CD4-positive, alpha-beta memory T cell (primary cell): ENCODE measurements at regions of chr1 and their contacts with region 1.

Region 1: GRCh38 chr1:26321315-26322041 is 3.7 kb downstream of the CD52 start:
- DNase-seq: peak; percentile 88 to 95 (median 91)
- H3K4me3 ChIP-seq: peak overlapping the region in 1 of 2 donors; percentile 94
- H3K4me3 Mint-ChIP-seq: peak overlapping the region; percentile 91 to 100 (median 96)
- H3K27ac ChIP-seq: peak overlapping the region; percentile 69
- H3K27ac Mint-ChIP-seq: peak overlapping the region; percentile 83 to 99 (median 95)
- H3K4me1 ChIP-seq: peaks cover 48% of the 10 kb centered on the region
- H3K4me1 Mint-ChIP-seq: peaks cover 30 to 64% (median 47%) of the 10 kb centered on the region in 4 donors
- H3K27me3 ChIP-seq: no peaks in the 10 kb centered on the region
- H3K27me3 Mint-ChIP-seq: no peaks in the 10 kb centered on the region

Region 2: DNA sequence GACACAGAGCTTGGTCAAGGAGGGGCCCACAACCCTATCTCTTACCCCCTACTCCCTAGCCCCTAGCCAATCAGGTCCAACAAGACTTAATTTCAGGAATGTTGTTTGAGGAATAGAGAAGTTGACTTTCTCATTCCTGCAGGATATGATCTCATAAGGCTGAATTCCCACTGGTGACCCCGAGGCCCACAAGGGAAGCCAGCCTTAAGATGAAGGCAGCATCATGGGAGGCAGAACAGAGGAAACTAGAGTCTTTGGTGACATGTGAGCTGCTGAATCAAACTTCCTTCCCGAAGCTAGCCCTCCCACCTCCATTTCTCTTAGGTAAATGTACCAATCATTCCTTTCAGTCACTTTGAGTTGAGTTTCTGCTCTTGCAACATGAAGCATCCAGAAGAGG is 219.0 kb before region 1 on chr1:
- CTCF ChIA-PET with region 1: no interaction called
- POLR2A ChIA-PET with region 1: no interaction called
- intact Hi-C with region 1: loop called (anchors 1 kb)
- DNase-seq: no peak
- H3K4me3 ChIP-seq: no peak overlapping the region
- H3K4me3 Mint-ChIP-seq: no peak overlapping the region
- H3K27ac ChIP-seq: no peak overlapping the region
- H3K27ac Mint-ChIP-seq: peak overlapping the region in 1 of 7 donors; percentile 17
- H3K4me1 ChIP-seq: no peaks in the 10 kb centered on the region
- H3K4me1 Mint-ChIP-seq: peaks cover 3 to 5% (median 4%) of the 10 kb centered on the region in 4 donors
- H3K27me3 ChIP-seq: no peaks in the 10 kb centered on the region
- H3K27me3 Mint-ChIP-seq: peaks cover 1 to 2% of the 10 kb centered on the region in 2 donors

Region 3: GRCh38 chr1:26190373-26190987 is 131.0 kb before region 1 on chr1 and contains the start of gene CATSPER4:
- CTCF ChIA-PET with region 1: no interaction called
- POLR2A ChIA-PET with region 1: no interaction called
- intact Hi-C with region 1: no loop called
- DNase-seq: peak in 4 of 5 donors; percentile 13 to 33 (median 18)
- H3K4me3 ChIP-seq: no peak within 1 kb of the TSS
- H3K4me3 Mint-ChIP-seq: no peak within 1 kb of the TSS
- H3K27ac ChIP-seq: no peak within 1 kb of the TSS
- H3K27ac Mint-ChIP-seq: peak within 1 kb of the TSS in 4 of 7 donors; percentile 36 to 88 (median 66)
- H3K4me1 ChIP-seq: peaks cover 7% of the 10 kb centered on the region
- H3K4me1 Mint-ChIP-seq: peaks cover 6 to 30% (median 14%) of the 10 kb centered on the region in 4 donors
- H3K27me3 ChIP-seq: no peaks in the 10 kb centered on the region
- H3K27me3 Mint-ChIP-seq: no peaks in the 10 kb centered on the region
- total RNA-seq, gene CATSPER4: not detected

Region 4: GRCh38 chr1:26279456-26280332 is 41.8 kb before region 1 on chr1 and contains the start of gene SH3BGRL3:
- CTCF ChIA-PET with region 1: interaction called, 1,027 read pairs
- POLR2A ChIA-PET with region 1: interaction called, 3,358 read pairs
- intact Hi-C with region 1: loop called (anchors 1 kb)
- DNase-seq: peak; percentile 83 to 88 (median 86)
- H3K4me3 ChIP-seq: peak within 1 kb of the TSS; percentile 50 to 92
- H3K4me3 Mint-ChIP-seq: peak within 1 kb of the TSS; percentile 85 to 96 (median 90)
- H3K27ac ChIP-seq: peak within 1 kb of the TSS; percentile 82
- H3K27ac Mint-ChIP-seq: peak within 1 kb of the TSS; percentile 94 to 98 (median 97)
- H3K4me1 ChIP-seq: peaks cover 88% of the 10 kb centered on the region
- H3K4me1 Mint-ChIP-seq: peaks cover 58 to 90% (median 76%) of the 10 kb centered on the region in 4 donors
- H3K27me3 ChIP-seq: no peaks in the 10 kb centered on the region
- H3K27me3 Mint-ChIP-seq: no peaks in the 10 kb centered on the region
- total RNA-seq, gene SH3BGRL3: 293 to 305 TPM

Region 5: GRCh38 chr1:26300586-26301275 is 20.7 kb before region 1 on chr1:
- CTCF ChIA-PET with region 1: interaction called, 128 read pairs
- POLR2A ChIA-PET with region 1: interaction called, 3,358 read pairs
- intact Hi-C with region 1: no loop called
- DNase-seq: no peak
- H3K4me3 ChIP-seq: no peak overlapping the region
- H3K4me3 Mint-ChIP-seq: no peak overlapping the region
- H3K27ac ChIP-seq: no peak overlapping the region
- H3K27ac Mint-ChIP-seq: peak overlapping the region in 3 of 7 donors; percentile 22 to 73 (median 48)
- H3K4me1 ChIP-seq: peaks cover 6% of the 10 kb centered on the region
- H3K4me1 Mint-ChIP-seq: peaks cover 4 to 22% (median 11%) of the 10 kb centered on the region in 4 donors
- H3K27me3 ChIP-seq: no peaks in the 10 kb centered on the region
- H3K27me3 Mint-ChIP-seq: no peaks in the 10 kb centered on the region

Region 6: GRCh38 chr1:26336477-26337205 is 15.2 kb after region 1 on chr1:
- CTCF ChIA-PET with region 1: interaction called, 14 read pairs
- POLR2A ChIA-PET with region 1: interaction called, 76 read pairs
- intact Hi-C with region 1: no loop called
- DNase-seq: peak; percentile 79 to 88 (median 82)
- H3K4me3 ChIP-seq: peak overlapping the region; percentile 61 to 73
- H3K4me3 Mint-ChIP-seq: peak overlapping the region; percentile 89 to 95 (median 92)
- H3K27ac ChIP-seq: peak overlapping the region; percentile 49
- H3K27ac Mint-ChIP-seq: peak overlapping the region in 6 of 7 donors; percentile 12 to 75 (median 62)
- H3K4me1 ChIP-seq: peaks cover 19% of the 10 kb centered on the region
- H3K4me1 Mint-ChIP-seq: peaks cover 0 to 33% (median 9%) of the 10 kb centered on the region in 4 donors
- H3K27me3 ChIP-seq: no peaks in the 10 kb centered on the region
- H3K27me3 Mint-ChIP-seq: no peaks in the 10 kb centered on the region

Region 7: DNA sequence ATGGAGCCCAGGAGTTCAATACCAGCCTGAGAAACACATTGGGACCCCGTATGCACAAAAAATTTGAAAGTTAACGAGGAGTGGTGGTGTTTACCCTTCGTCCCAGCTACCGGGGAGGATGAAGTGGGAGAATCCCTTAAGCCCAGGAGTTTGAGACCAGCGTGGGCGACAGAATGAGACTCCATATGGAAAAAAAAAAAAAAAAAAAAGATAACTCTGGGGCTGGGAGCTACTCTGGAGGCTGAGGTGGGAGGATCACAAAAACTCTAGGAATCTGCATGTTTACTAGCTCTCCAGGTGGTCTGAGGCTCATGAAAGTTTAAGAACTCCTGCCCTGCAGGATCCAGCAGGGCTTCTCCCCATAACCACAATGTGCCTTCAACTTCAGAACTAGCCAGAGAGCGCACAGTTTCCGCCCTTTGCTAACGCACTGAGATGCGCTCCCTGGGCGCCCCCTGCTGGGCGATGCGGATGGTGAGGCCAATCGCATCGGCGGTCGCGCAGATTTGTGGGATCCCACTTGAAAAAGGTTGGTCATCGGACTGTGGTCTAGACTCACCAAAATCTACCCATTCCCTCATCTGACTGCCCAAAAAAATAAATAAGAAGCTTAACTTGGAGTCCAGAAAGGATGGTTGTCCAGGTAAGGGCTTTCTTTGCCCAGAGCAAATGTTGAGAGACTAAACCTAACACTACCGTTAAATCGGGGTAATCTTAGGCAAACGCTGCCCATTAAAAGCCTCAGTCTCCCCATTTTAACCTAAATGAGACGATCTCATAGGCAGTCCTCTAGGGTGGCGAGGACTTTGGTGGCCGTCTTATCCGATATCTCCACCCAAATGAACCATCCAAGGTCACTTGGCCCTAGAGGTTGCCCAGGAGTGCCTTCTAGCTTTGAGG is 42.3 kb after region 1 on chr1:
- CTCF ChIA-PET with region 1: interaction called, 34 read pairs
- POLR2A ChIA-PET with region 1: interaction called, 32 read pairs
- intact Hi-C with region 1: loop called (anchors 2 kb)
- DNase-seq: peak; percentile 78 to 84 (median 79)
- H3K4me3 ChIP-seq: no peak overlapping the region
- H3K4me3 Mint-ChIP-seq: peak overlapping the region in 6 of 8 donors; percentile 54 to 82 (median 64)
- H3K27ac ChIP-seq: no peak overlapping the region
- H3K27ac Mint-ChIP-seq: peak overlapping the region in 6 of 7 donors; percentile 27 to 88 (median 70)
- H3K4me1 ChIP-seq: peaks cover 70% of the 10 kb centered on the region
- H3K4me1 Mint-ChIP-seq: peaks cover 31 to 81% (median 52%) of the 10 kb centered on the region in 4 donors
- H3K27me3 ChIP-seq: no peaks in the 10 kb centered on the region
- H3K27me3 Mint-ChIP-seq: no peaks in the 10 kb centered on the region

Region 8: DNA sequence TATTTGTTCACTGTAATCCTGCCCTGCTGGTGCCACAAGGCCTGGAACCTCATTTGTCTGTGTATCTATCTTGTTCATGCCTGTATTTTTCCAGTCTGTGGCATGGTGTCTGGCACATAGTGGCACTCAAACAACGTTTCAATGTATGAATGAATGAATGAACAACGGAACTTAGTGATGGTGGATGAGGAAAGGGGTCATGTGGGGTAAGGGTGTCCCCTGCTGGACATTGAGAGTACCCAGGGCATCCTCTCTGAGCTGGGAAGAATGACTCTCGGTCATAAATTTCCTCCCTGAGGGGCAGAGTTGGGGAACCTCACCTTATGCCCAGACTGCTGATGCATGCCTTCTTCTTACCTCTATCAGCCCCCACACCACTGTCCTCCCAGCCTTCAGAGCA is 70.0 kb after region 1 on chr1:
- CTCF ChIA-PET with region 1: interaction called, 29 read pairs
- POLR2A ChIA-PET with region 1: interaction called, 53 read pairs
- intact Hi-C with region 1: loop called (anchors 1 kb)
- DNase-seq: peak; percentile 52 to 63 (median 56)
- H3K4me3 ChIP-seq: no peak overlapping the region
- H3K4me3 Mint-ChIP-seq: peak overlapping the region in 2 of 8 donors; percentile 1 to 43
- H3K27ac ChIP-seq: no peak overlapping the region
- H3K27ac Mint-ChIP-seq: peak overlapping the region in 3 of 7 donors; percentile 51 to 75 (median 59)
- H3K4me1 ChIP-seq: peaks cover 42% of the 10 kb centered on the region
- H3K4me1 Mint-ChIP-seq: peaks cover 24 to 40% (median 28%) of the 10 kb centered on the region in 4 donors
- H3K27me3 ChIP-seq: no peaks in the 10 kb centered on the region
- H3K27me3 Mint-ChIP-seq: no peaks in the 10 kb centered on the region